ENCODE measurements at regions of chr17 and their contacts with region 1.

Region 1: GRCh38 chr17:81394921-81395599 is at the start of gene BAHCC1:
- DNase-seq: peak; percentile 99 to 100 (median 99)
- H3K4me3 ChIP-seq: peak within 1 kb of the TSS; percentile 55 to 93 (median 62)
- H3K4me3 Mint-ChIP-seq: peak within 1 kb of the TSS; percentile 92 to 93
- H3K27ac ChIP-seq: peak within 1 kb of the TSS; percentile 64 to 92
- H3K27ac Mint-ChIP-seq: peak within 1 kb of the TSS; percentile 82 to 95 (median 93)
- H3K4me1 ChIP-seq: peaks cover 48 to 78% of the 10 kb centered on the region in 2 donors
- H3K4me1 Mint-ChIP-seq: peaks cover 49% of the 10 kb centered on the region
- H3K27me3 ChIP-seq: no peaks in the 10 kb centered on the region
- H3K27me3 Mint-ChIP-seq: peaks cover 0 to 4% (median 2%) of the 10 kb centered on the region in 3 donors
- CTCF ChIP-seq: no peak
- polyA plus RNA-seq, gene BAHCC1: 0.11 to 8.8 (median 0.27) TPM

Region 2: GRCh38 chr17:81294856-81295680 is 100.0 kb before region 1 on chr17 and contains the start of gene SLC38A10:
- intact Hi-C with region 1: loop called in 1 of 2 experiments (anchors 2 kb)
- DNase-seq: peak; percentile 92 to 93 (median 92)
- H3K4me3 ChIP-seq: peak within 1 kb of the TSS; percentile 64 to 95 (median 81)
- H3K4me3 Mint-ChIP-seq: peak within 1 kb of the TSS; percentile 93 to 96
- H3K27ac ChIP-seq: peak within 1 kb of the TSS; percentile 79 to 95
- H3K27ac Mint-ChIP-seq: peak within 1 kb of the TSS; percentile 97 to 99 (median 98)
- H3K4me1 ChIP-seq: peaks cover 54 to 59% of the 10 kb centered on the region in 2 donors
- H3K4me1 Mint-ChIP-seq: peaks cover 49% of the 10 kb centered on the region
- H3K27me3 ChIP-seq: no peaks in the 10 kb centered on the region
- H3K27me3 Mint-ChIP-seq: peaks cover 2 to 3% (median 2%) of the 10 kb centered on the region in 3 donors
- CTCF ChIP-seq: no peak
- polyA plus RNA-seq, gene SLC38A10: 50.8 to 76.1 (median 68.4) TPM

Region 3: DNA sequence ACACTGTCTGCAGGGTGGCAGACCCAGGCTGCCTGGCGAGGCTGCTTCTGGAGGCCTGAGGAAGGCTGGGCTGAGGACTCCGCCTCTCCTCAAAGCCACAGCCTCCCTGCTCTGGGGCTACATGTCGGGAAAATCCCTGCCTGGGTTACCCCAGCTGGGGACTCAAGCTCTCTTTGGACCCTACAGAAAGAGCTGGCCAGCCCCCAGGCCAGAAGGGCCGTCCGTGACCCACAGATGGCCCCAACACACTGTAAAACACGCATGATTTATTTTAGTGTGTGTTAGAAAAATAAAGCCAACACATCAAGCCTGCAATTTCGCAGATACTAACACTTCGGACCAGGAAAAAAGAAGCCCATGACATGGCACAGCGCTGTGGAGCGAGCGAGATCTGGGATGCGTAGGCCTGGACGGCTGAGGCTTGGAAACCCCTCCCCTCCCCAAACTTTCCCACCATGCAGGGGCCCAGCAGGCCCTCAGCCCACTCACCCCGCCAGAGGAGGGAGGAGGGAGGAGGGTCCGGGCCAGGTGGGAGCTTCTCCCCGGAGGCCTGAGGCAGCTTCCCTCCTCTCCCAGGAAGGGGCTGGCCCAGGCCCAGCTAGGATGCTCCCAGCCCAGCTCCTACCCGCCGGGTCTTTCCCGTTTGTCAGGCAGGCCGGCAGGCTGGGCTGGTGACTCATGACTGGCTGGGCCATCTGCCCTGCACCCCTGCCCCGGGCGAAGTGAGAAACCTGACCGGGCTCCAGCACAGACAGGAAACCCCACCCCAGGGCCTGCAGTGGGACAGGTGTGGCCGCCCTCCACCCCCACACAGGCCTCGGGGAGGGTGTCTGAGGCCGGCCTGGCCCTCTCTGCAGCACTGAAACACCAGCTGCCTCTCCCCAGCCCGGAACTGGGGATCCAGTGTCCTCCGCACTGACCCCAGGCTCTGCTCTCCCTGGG is 65.8 kb before region 1 on chr17:
- intact Hi-C with region 1: loop called in 1 of 2 experiments (anchors 5 kb)
- DNase-seq: peak; percentile 67 to 92 (median 88)
- H3K4me3 ChIP-seq: peak overlapping the region in 1 of 3 experiments; percentile 55
- H3K4me3 Mint-ChIP-seq: peak overlapping the region; percentile 27 to 46
- H3K27ac ChIP-seq: peak overlapping the region; percentile 6 to 62
- H3K27ac Mint-ChIP-seq: peak overlapping the region in 6 of 7 donors; percentile 57 to 81 (median 74)
- H3K4me1 ChIP-seq: peaks cover 68 to 75% of the 10 kb centered on the region in 2 donors
- H3K4me1 Mint-ChIP-seq: peaks cover 68% of the 10 kb centered on the region
- H3K27me3 ChIP-seq: no peaks in the 10 kb centered on the region
- H3K27me3 Mint-ChIP-seq: peaks cover 4 to 12% (median 11%) of the 10 kb centered on the region in 3 donors
- CTCF ChIP-seq: no peak

Region 4: GRCh38 chr17:81412490-81413093 is 17.5 kb after region 1 on chr17:
- intact Hi-C with region 1: no loop called
- DNase-seq: peak in 1 of 3 donors; percentile 29
- H3K4me3 ChIP-seq: no peak overlapping the region
- H3K4me3 Mint-ChIP-seq: peak overlapping the region in 1 of 2 donors; percentile 57
- H3K27ac ChIP-seq: no peak overlapping the region
- H3K27ac Mint-ChIP-seq: no peak overlapping the region
- H3K4me1 ChIP-seq: peaks cover 9 to 15% of the 10 kb centered on the region in 2 donors
- H3K4me1 Mint-ChIP-seq: peaks cover 23% of the 10 kb centered on the region
- H3K27me3 ChIP-seq: no peaks in the 10 kb centered on the region
- H3K27me3 Mint-ChIP-seq: peaks cover 4 to 10% (median 7%) of the 10 kb centered on the region in 3 donors
- CTCF ChIP-seq: no peak

Region 5: DNA sequence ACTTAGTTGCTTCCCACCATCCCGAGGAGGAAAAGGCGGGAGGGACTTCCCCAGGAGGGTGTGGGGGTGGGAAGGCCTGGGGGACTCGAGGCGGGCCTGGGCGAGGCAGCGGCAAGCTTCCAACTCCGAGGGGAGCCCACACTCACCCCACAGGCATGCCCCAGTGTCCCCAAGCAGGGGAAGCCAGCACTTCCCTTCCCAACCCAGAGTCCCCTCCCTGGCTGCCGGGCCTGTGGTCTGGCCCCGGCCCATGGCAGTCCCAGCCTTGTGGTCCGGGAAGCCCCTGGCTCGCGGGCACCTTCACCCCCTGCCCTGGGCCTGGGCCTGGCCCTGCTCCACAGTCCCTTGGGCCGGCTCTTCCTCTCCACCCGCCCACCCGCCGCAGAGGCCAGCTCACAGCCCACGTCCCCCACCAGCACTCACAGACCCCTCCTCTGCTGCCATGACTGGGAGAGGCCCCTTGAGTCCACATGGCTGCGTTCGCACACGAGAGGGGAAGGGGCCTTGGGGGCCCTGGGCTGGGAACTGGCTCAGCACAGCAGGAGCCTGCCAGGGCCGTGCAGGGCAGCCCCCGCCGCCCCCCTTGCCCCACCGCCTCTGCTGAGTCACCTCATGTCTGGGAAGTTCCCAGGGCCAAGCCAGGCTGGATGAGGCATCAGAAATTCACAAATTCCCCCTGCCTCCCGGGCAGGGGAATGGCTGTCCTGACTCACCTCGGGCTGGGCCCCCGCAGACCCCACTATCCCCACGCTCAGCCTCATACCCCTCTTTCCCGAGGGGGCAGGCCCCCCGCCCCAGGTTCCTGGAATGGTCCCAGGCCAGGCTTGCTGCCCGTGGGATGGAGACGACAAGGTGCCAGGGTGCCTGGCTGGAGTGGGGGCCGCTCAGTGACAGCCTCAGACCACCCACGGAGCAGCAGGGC is 28.0 kb after region 1 on chr17:
- intact Hi-C with region 1: loop called in 1 of 2 experiments (anchors 2 kb)
- DNase-seq: peak; percentile 82 to 97 (median 86)
- H3K4me3 ChIP-seq: peak overlapping the region in 2 of 3 experiments; percentile 22 to 48
- H3K4me3 Mint-ChIP-seq: peak overlapping the region; percentile 51 to 60
- H3K27ac ChIP-seq: peak overlapping the region in 1 of 2 donors; percentile 59
- H3K27ac Mint-ChIP-seq: peak overlapping the region in 3 of 7 donors; percentile 30 to 50 (median 30)
- H3K4me1 ChIP-seq: peaks cover 41 to 55% of the 10 kb centered on the region in 2 donors
- H3K4me1 Mint-ChIP-seq: peaks cover 25% of the 10 kb centered on the region
- H3K27me3 ChIP-seq: peaks cover 0 to 14% of the 10 kb centered on the region in 2 donors
- H3K27me3 Mint-ChIP-seq: peaks cover 4 to 13% (median 7%) of the 10 kb centered on the region in 3 donors
- CTCF ChIP-seq: no peak